ENCODE measurements at regions of chr17 and their contacts with region 1.

Region 1: GRCh38 chr17:74566132-74566753 is 1.1 kb downstream of the CD300H start:
- DNase-seq: no peak
- H3K4me3 Mint-ChIP-seq: no peak overlapping the region
- H3K27ac Mint-ChIP-seq: no peak overlapping the region
- H3K4me1 Mint-ChIP-seq: peaks cover 15% of the 10 kb centered on the region
- H3K27me3 Mint-ChIP-seq: peaks cover 22% of the 10 kb centered on the region

Region 2: DNA sequence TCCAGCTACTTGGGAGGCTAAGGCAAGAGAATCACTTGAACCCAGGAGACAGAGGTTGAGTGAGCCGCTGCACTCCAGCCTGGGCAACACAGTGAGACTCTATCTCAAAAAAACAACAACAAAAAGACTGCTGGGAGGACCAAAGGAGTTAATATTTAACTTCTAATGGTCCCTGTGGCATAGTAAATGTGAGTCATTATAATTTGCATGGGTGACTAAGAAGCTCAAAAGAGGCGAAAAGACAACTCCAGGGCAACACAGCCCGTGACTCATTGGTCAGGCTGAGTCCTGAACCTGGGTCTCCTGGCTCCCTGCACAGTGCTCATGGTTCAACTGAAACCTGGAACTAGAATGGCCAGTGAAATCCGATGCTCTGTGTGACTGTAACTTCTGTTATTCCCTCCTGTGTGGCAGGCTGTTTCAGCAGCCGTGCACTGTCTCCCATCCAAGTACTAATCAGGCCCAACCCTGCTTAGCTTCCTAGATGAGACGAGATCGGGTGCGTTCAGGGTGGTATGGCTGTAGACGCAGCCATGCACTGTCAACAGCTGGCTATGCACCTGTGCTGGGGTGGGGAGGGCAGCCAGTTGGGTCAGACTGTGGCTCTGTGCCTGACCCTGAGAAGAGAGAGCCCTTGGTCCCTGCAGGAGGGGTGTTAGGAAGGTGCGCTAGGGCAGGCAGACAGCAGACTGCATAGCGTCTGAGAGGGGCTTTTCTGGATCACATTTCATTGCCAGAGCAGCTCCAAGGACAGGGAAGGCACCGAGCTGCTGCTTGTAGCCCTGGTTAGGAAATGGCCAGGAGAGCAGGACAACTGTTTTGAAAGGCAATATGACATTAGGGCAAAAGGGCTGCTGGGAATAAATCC is 148.8 kb before region 1 on chr17:
- intact Hi-C with region 1: no loop called
- DNase-seq: no peak
- H3K4me3 Mint-ChIP-seq: no peak overlapping the region
- H3K27ac Mint-ChIP-seq: no peak overlapping the region
- H3K4me1 Mint-ChIP-seq: peaks cover 4% of the 10 kb centered on the region
- H3K27me3 Mint-ChIP-seq: peaks cover 5% of the 10 kb centered on the region

Region 3: DNA sequence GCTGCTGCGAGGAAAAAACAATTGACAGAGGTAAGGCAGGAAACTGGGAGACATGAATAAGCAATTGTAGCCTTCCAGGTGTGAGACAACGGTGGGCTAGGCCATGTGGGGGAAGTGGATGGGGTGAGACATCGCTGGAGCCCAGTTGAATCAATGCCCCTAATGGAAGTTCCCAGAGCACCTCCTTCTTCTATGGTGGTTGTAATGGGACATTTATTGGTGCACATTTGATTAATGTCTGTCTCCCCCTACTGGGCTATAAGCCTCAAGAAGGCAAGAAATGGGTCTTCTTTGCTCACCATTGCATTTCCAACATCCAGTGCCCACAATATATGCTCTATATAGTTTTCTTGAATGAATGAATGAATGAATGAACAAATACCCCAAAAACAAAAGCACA is 80.0 kb after region 1 on chr17:
- intact Hi-C with region 1: loop called (anchors 10 kb)
- DNase-seq: no peak
- H3K4me3 Mint-ChIP-seq: no peak overlapping the region
- H3K27ac Mint-ChIP-seq: no peak overlapping the region
- H3K4me1 Mint-ChIP-seq: peaks cover 3% of the 10 kb centered on the region
- H3K27me3 Mint-ChIP-seq: peaks cover 56% of the 10 kb centered on the region

Region 4: GRCh38 chr17:74736513-74737298 is 170.5 kb after region 1 on chr17 and contains the start of gene RAB37:
- intact Hi-C with region 1: loop called (anchors 5 kb)
- DNase-seq: peak; percentile 35
- H3K4me3 Mint-ChIP-seq: peak within 1 kb of the TSS; percentile 84
- H3K27ac Mint-ChIP-seq: peak within 1 kb of the TSS; percentile 87
- H3K4me1 Mint-ChIP-seq: peaks cover 41% of the 10 kb centered on the region
- H3K27me3 Mint-ChIP-seq: peaks cover 9% of the 10 kb centered on the region
- total RNA-seq, gene RAB37: 9.7 and 12.1 TPM in 2 replicates